ENCODE measurements at regions of chr7 and their contacts with region 1.

Region 1: GRCh38 chr7:155257482-155258225 is 40.0 kb upstream of the INSIG1 start:
- DNase-seq: peak; percentile 83 to 91
- ATAC-seq: peak; percentile 85 to 93 (median 88)
- H3K4me3 ChIP-seq: peak overlapping the region; percentile 47
- H3K27ac ChIP-seq: peak overlapping the region; percentile 91
- H3K4me1 ChIP-seq: peaks cover 21% of the 10 kb centered on the region
- H3K27me3 ChIP-seq: no peaks in the 10 kb centered on the region
- CTCF ChIP-seq: no peak

Region 2: GRCh38 chr7:155168597-155169480 is 88.8 kb before region 1 on chr7:
- intact Hi-C with region 1: no loop called
- DNase-seq: no peak
- ATAC-seq: no peak
- H3K4me3 ChIP-seq: no peak overlapping the region
- H3K27ac ChIP-seq: no peak overlapping the region
- H3K4me1 ChIP-seq: no peaks in the 10 kb centered on the region
- H3K27me3 ChIP-seq: peaks cover 0 to 7% (median 0%) of the 10 kb centered on the region in 3 donors
- CTCF ChIP-seq: no peak

Region 3: DNA sequence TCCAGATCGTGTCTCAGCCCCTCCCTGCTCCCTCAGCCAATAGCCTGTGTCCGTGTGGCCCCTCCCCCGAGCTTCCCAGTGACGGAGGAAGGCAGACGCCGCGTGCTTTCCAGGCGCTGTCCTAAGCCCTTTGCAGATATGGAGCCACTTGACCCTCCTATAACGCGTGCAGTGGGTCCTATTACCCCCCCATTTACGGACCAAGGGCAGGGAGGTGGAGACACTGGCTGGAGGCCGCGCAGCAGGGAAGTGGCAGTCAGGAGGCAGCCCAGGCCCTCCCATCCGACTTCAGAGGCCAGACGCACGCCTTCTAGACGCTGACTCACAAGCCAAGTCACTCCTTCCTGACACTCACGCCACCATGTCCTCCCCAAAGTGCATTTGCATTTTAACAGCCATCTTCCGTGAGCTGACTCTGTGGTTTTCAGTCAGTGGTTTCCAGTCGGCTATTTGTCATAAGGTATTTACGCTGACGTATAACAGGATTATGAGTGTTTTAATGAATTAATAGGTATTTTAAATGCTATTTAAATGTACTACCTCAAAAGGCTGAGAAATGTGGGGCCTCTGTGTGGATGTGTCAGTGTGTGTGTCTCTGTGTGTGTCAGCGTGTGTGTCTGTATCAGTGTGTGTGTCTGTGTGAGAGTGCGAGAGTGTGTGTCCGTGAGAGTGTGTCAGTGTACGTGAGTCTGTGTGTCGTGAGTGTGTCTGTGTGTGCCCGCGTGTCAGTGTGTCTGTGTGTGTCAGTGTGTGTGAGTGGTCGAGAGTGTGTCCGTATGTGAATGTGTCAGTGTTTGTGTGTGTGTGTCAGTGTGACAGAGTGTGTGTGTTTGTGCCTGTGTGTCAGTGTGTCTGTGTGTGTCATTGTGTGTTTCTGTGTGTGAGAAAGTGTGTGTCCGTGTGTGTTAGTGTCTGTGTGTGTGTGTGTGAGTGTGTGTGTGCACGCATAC is 52.0 kb before region 1 on chr7:
- intact Hi-C with region 1: loop called in 1 of 2 experiments (anchors 5 kb)
- DNase-seq: peak; percentile 89 to 94
- ATAC-seq: peak; percentile 79 to 90 (median 82)
- H3K4me3 ChIP-seq: peak overlapping the region; percentile 53
- H3K27ac ChIP-seq: peak overlapping the region; percentile 75
- H3K4me1 ChIP-seq: no peaks in the 10 kb centered on the region
- H3K27me3 ChIP-seq: peaks cover 0 to 2% (median 0%) of the 10 kb centered on the region in 3 donors
- CTCF ChIP-seq: no peak

Region 4: GRCh38 chr7:155219936-155220769 is 37.5 kb before region 1 on chr7:
- intact Hi-C with region 1: no loop called
- DNase-seq: no peak
- ATAC-seq: peak in 3 of 4 donors; percentile 34 to 68 (median 65)
- H3K4me3 ChIP-seq: no peak overlapping the region
- H3K27ac ChIP-seq: no peak overlapping the region
- H3K4me1 ChIP-seq: no peaks in the 10 kb centered on the region
- H3K27me3 ChIP-seq: peaks cover 0 to 5% (median 0%) of the 10 kb centered on the region in 3 donors
- CTCF ChIP-seq: no peak

Region 5: GRCh38 chr7:155230168-155230593 is 27.5 kb before region 1 on chr7:
- intact Hi-C with region 1: loop called in 1 of 2 experiments (anchors 2 kb)
- DNase-seq: peak; percentile 77 to 84
- ATAC-seq: peak; percentile 96 to 99 (median 98)
- H3K4me3 ChIP-seq: no peak overlapping the region
- H3K27ac ChIP-seq: peak overlapping the region; percentile 58
- H3K4me1 ChIP-seq: peaks cover 16% of the 10 kb centered on the region
- H3K27me3 ChIP-seq: no peaks in the 10 kb centered on the region
- CTCF ChIP-seq: no peak

Region 6: GRCh38 chr7:155291045-155291530 is 33.4 kb after region 1 on chr7:
- intact Hi-C with region 1: loop called in 1 of 2 experiments (anchors 1 kb)
- DNase-seq: peak in 1 of 2 donors; percentile 59
- ATAC-seq: peak; percentile 76 to 91 (median 86)
- H3K4me3 ChIP-seq: no peak overlapping the region
- H3K27ac ChIP-seq: no peak overlapping the region
- H3K4me1 ChIP-seq: no peaks in the 10 kb centered on the region
- H3K27me3 ChIP-seq: no peaks in the 10 kb centered on the region
- CTCF ChIP-seq: no peak

Measured in psoas muscle (tissue), 8 donors.